Activated naive CD4-positive, alpha-beta T cell treated with anti-CD3 and anti-CD28 coated beads for 36 hours (primary cell): ENCODE measurements at regions of chr6 and their contacts with region 1.

Region 1: DNA sequence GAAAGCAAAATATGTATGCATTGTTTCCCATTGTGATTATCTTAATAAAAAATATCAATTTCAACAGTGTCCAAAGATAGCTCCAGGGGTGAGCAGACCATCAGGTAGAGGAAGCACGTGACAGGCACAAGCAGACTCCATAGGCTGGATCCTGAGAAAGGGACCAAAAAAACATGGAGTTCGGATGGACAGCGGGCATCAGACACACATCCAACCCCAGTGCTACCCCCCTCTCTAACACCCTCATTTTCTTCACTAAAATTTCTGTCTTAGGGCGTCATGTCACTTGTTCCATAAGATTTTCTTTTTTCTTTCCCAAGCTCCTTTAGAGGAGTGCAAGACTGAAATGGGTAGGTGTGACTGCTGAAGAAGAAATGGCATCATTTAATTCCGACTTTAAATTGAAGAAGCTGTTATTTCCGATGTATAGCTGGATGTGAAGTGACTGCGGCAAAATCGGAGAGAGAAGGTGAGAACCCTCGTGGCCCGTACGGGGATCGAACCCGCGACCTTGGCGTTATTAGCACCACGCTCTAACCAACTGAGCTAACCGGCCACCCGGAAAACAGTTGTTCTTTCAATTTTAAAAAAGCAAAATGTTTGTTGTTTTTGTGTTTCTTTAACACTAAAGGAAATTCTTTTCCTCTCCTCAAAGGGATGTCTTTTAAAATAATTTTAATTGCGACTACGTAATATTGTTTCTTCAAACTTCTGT is 10.3 kb upstream of the PRSS16 start:
- DNase-seq: peak; percentile 75
- H3K4me3 Mint-ChIP-seq: peak overlapping the region; percentile 53
- H3K27ac Mint-ChIP-seq: peak overlapping the region; percentile 5
- H3K4me1 Mint-ChIP-seq: peaks cover 20% of the 10 kb centered on the region
- H3K27me3 Mint-ChIP-seq: peaks cover 68% of the 10 kb centered on the region

Region 2: DNA sequence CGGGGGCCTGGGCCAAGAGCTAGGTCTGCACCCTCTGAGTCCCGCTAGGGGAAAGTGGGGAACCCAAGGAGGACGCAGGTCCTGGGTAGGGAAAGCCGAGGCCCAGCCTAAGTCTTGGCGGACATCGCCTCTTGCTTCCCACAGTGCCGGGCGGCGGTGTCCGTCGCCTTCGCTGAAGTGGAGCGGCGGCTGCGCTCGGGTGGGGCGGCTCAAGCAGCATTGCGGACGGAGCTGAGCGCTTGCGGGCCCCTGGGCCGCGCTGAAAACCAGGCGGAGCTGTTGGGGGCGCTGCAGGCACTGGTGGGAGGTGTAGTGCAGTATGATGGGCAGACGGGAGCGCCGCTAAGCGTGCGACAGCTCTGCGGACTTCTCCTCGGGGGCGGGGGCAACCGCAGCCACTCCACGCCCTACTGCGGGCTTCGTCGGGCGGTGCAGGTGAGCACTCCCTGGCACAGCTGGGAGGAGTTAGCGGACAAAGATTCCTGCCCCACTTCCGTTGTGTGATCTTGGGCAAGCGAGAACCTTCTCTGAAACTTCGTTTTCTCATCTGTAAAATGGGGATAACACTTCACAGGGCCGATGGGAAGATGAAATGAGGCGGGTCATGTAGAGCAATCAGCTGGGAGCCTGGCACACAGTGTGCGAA is 14.5 kb after region 1 on chr6:
- CTCF ChIA-PET with region 1: interaction called, 4 read pairs
- intact Hi-C with region 1: loop called (anchors 1 kb)
- DNase-seq: peak; percentile 86
- H3K4me3 Mint-ChIP-seq: peak overlapping the region; percentile 89
- H3K27ac Mint-ChIP-seq: no peak overlapping the region
- H3K4me1 Mint-ChIP-seq: peaks cover 9% of the 10 kb centered on the region
- H3K27me3 Mint-ChIP-seq: peaks cover 63% of the 10 kb centered on the region

Region 3: DNA sequence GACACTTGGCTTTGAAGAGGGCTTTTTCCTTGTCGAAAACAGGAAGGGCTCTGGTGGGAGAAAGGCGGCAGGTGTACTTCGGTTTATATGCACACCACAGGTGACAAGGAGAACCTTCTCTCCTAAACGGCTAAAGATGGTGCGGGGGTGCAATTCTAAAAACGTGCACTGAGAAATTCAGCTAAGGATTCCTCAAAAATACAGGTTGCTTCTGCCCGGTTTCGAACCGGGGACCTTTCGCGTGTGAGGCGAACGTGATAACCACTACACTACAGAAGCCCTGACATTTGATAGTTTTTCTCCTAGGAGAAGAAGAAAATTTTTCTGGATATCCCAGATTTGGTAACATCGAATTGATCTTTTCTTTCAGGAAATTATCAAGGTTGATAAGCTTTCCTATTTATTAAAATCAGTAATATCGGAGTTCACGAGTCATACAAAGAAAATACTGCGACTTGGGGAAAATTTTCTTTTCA is 42.9 kb after region 1 on chr6:
- CTCF ChIA-PET with region 1: no interaction called
- intact Hi-C with region 1: loop called (anchors 5 kb)
- DNase-seq: peak; percentile 43
- H3K4me3 Mint-ChIP-seq: peak overlapping the region; percentile 63
- H3K27ac Mint-ChIP-seq: peak overlapping the region; percentile 36
- H3K4me1 Mint-ChIP-seq: peaks cover 4% of the 10 kb centered on the region
- H3K27me3 Mint-ChIP-seq: peaks cover 70% of the 10 kb centered on the region